ENCODE measurements at regions of chr4 and their contacts with region 1.

Region 1: DNA sequence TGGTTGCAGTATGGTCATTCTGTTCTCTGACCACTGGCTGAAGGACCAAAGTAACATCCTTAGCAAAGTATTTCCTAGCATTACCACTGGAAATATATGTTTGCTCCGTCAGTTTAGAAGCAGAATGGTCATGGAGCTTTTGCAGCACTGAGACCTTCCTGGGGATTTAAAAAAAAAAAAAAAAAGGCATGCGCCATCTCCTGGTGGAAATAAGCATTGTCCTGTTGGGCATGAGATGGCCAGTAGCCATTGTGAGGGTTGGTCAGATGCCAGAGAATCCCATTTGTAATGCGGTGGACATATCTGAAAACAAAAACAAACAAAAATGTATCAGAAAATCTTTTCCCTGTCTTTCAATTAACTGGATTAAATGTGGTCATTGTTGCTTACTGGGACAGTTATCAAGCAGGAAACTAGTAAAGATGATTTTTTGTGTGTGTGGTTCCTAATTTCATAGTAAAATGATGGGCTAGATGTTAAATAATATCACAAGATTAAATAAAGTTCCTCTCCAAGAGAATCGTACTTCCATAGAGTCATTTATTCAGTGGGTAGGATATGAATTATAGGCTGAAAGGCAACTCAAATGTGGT is 139.6 kb downstream of the SOWAHB start:
- DNase-seq: no peak
- H3K4me3 ChIP-seq: no peak overlapping the region
- CTCF ChIP-seq: peak; percentile 51

Region 2: GRCh38 chr4:76515975-76516843 is 242.2 kb before region 1 on chr4:
- CTCF ChIA-PET with region 1: interaction called, 24 read pairs
- POLR2A ChIA-PET with region 1: no interaction called
- DNase-seq: no peak
- H3K4me3 ChIP-seq: no peak overlapping the region
- CTCF ChIP-seq: no peak

Region 3: GRCh38 chr4:76744241-76744921 is 14.0 kb before region 1 on chr4:
- CTCF ChIA-PET with region 1: interaction called, 10 read pairs
- POLR2A ChIA-PET with region 1: interaction called, 3 read pairs
- DNase-seq: no peak
- H3K4me3 ChIP-seq: peak overlapping the region; percentile 27
- CTCF ChIP-seq: no peak

Region 4: GRCh38 chr4:76923619-76924357 is 165.4 kb after region 1 on chr4:
- CTCF ChIA-PET with region 1: no interaction called
- POLR2A ChIA-PET with region 1: no interaction called
- DNase-seq: no peak
- H3K4me3 ChIP-seq: no peak overlapping the region
- CTCF ChIP-seq: no peak

Region 5: GRCh38 chr4:76987153-76987587 is 228.8 kb after region 1 on chr4:
- CTCF ChIA-PET with region 1: interaction called, 10 read pairs
- POLR2A ChIA-PET with region 1: interaction called, 4 read pairs
- DNase-seq: peak; percentile 98
- H3K4me3 ChIP-seq: peak overlapping the region; percentile 15
- CTCF ChIP-seq: peak; percentile 24

Measured in AG04449 (cell line).